GM10248 (cell line): ENCODE measurements at regions of chr2 and their contacts with region 1.

Region 1: DNA sequence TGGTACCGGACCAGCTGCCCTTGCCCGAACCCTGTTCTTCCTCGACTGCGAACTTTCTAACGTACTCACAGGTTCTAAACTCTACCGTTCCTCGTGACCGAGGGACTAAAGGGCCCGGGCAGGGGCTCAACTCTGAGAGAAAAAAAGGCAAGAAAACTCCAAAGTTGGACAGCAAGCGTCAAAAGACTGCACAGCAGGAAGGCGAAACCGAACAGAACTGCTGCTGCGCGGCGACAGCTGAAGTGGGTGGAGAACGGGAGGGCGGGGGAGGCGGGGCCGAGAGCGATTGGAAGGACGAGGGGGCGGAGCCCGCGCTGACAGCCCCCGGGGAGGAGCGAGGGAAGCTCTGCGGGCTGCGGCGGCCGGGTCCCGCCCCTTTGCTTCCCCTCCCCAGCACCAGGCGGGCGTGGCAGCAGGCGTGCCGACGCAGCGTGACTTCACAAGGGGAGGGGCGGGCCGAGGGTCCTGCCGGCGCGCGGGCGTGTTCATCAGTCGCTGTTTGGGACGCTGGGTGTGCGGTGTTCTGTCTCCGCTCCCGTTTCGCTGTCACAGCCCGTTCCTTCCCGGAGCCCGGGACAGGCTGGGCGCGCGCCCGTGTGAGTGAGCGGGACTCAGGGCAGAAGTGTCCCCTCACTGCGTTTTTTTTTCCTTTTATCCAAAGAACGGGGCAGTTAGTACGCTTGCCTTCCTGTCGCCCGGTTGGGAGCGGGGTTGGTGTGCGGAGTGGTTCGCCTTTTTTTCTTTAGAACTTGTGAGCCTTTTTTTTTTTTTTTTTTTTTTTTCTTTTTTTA is at the start of gene NABP1:
- DNase-seq: peak; percentile 98
- CTCF ChIP-seq: no peak

Region 2: DNA sequence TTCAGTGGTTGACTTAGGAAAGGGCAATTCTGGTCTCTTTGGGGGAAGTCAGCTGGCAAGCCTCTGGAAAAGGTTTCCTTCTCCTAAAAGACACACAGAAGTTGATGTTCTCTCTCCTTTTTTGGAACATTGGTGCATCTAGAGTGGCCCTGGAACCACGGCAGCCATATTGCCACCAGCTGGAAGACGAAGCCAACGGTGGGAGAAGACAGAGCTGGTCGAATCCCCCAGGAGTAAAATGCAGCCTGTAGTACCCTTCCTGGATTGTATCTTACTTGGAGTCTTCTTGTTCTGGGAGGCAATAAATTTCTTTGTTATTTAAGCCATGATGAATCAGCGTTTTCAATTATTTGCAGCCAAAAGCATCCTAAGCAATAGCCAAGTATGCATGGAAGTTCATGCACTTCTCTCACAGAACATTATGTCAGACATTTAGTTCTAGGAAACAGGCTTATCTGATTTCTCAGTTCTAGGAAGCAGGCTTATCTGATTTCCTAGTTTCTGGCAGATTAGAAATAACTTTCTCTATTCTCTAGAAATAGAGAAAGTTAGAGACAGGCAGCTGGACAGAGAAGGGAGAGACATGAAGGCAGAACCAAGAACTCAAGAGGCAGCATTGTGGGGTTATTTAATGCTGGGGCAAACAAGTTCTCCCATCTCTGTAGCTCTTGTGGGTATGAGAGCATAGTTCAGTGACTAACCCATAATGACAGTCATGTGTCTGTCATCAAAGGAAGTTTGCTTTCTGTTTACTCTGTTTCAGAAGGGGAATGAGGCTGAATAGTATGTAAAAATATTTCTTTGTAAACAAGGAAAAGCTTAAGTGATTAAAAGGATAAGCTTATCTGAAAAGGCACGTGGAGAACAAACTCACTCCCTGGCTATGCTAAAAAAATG is 40.4 kb before region 1 on chr2:
- CTCF ChIA-PET with region 1: interaction called, 5 read pairs
- POLR2A ChIA-PET with region 1: interaction called, 16 read pairs
- DNase-seq: peak; percentile 32
- CTCF ChIP-seq: no peak

Region 3: GRCh38 chr2:191666732-191667131 is 11.1 kb before region 1 on chr2:
- CTCF ChIA-PET with region 1: interaction called, 20 read pairs
- POLR2A ChIA-PET with region 1: interaction called, 23 read pairs
- DNase-seq: peak; percentile 16
- CTCF ChIP-seq: no peak

Region 4: DNA sequence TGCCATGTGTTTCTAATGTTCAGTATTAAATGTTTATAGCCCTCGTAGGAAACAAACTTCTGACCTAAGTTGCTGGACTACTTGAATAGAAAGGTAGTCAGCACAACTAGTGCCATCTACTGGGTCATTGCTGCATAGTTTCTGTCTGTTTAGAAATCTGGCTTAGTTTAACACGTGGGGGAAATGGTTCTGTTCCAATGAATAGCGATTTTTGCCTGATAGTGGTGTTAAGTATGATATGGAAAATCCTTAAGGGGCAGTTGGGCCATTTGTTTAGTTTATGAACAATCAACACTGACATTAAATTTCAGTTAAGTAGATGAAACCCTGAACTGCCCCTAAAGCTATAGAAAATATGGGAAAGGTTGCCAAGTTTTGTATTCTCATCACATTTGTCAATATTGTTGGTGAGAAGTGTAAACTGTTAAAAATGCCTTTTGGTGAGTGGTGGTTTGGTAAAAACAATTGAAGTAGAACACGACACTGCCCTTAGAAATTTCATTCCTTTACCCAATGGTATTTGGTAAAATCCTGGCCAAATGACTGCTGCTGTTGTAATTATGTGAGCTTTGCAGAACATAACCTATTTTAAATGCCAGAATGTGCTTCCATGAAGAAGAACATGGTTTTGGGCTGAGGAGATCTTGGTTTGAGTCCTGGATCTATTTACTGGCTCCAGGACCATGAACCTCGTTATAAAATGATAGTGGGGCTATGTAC is 13.3 kb after region 1 on chr2:
- CTCF ChIA-PET with region 1: interaction called, 5 read pairs
- POLR2A ChIA-PET with region 1: interaction called, 16 read pairs
- DNase-seq: peak; percentile 69
- CTCF ChIP-seq: peak; percentile 61